CD4-positive, alpha-beta T cell (primary cell): ENCODE measurements at regions of chr16 and their contacts with region 1.

Region 1: GRCh38 chr16:50665128-50665878 is 15.8 kb downstream of the SNX20 start:
- DNase-seq: peak; percentile 69 to 92 (median 85)
- ATAC-seq: peak; percentile 60
- H3K4me3 ChIP-seq: peak overlapping the region; percentile 58
- H3K4me3 Mint-ChIP-seq: peak overlapping the region; percentile 86
- H3K27ac ChIP-seq: peak overlapping the region in 1 of 2 donors; percentile 18
- H3K27ac Mint-ChIP-seq: peak overlapping the region; percentile 88
- H3K4me1 ChIP-seq: peaks cover 39% of the 10 kb centered on the region
- H3K4me1 Mint-ChIP-seq: peaks cover 44% of the 10 kb centered on the region
- H3K27me3 ChIP-seq: no peaks in the 10 kb centered on the region
- H3K27me3 Mint-ChIP-seq: no peaks in the 10 kb centered on the region
- CTCF ChIP-seq: peak; percentile 89

Region 2: GRCh38 chr16:50210266-50211038 is 454.9 kb before region 1 on chr16:
- CTCF ChIA-PET with region 1: interaction called, 5 read pairs
- POLR2A ChIA-PET with region 1: interaction called, 3 read pairs
- intact Hi-C with region 1: loop called (anchors 2 to 5 kb)
- DNase-seq: peak; percentile 42 to 79 (median 58)
- ATAC-seq: peak; percentile 92
- H3K4me3 ChIP-seq: no peak overlapping the region
- H3K4me3 Mint-ChIP-seq: no peak overlapping the region
- H3K27ac ChIP-seq: peak overlapping the region in 1 of 2 donors; percentile 26
- H3K27ac Mint-ChIP-seq: peak overlapping the region; percentile 32
- H3K4me1 ChIP-seq: peaks cover 9% of the 10 kb centered on the region
- H3K4me1 Mint-ChIP-seq: peaks cover 50% of the 10 kb centered on the region
- H3K27me3 ChIP-seq: no peaks in the 10 kb centered on the region
- H3K27me3 Mint-ChIP-seq: no peaks in the 10 kb centered on the region
- CTCF ChIP-seq: peak; percentile 64

Region 3: DNA sequence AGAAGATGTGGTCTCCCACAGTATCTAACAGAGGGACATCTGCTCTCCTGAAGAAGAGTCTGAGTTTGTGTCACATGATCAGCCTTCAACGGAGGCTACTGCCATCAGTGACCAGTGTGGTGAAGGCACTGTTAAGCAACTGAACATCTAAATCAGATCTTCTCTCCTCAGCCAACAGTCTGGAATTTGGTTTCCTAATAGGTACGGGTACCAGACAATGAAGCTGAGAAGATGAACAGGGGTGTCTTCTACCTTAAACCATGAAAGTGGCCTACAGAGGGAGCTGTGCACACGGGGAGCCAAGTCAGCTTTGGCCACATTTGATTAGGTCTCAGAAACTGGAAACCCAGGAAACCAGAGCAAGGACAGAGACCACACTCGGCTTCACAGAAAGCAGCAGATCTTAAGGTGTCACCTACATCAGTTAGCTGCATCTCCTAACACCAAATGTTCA is 338.3 kb before region 1 on chr16:
- CTCF ChIA-PET with region 1: interaction called, 25 read pairs
- POLR2A ChIA-PET with region 1: interaction called, 6 read pairs
- intact Hi-C with region 1: loop called in 1 of 2 experiments (anchors 5 kb)
- DNase-seq: peak; percentile 39 to 93 (median 62)
- ATAC-seq: peak; percentile 92
- H3K4me3 ChIP-seq: no peak overlapping the region
- H3K4me3 Mint-ChIP-seq: no peak overlapping the region
- H3K27ac ChIP-seq: peak overlapping the region in 1 of 2 donors; percentile 20
- H3K27ac Mint-ChIP-seq: peak overlapping the region; percentile 84
- H3K4me1 ChIP-seq: peaks cover 38% of the 10 kb centered on the region
- H3K4me1 Mint-ChIP-seq: peaks cover 64% of the 10 kb centered on the region
- H3K27me3 ChIP-seq: no peaks in the 10 kb centered on the region
- H3K27me3 Mint-ChIP-seq: no peaks in the 10 kb centered on the region
- CTCF ChIP-seq: peak; percentile 83

Region 4: DNA sequence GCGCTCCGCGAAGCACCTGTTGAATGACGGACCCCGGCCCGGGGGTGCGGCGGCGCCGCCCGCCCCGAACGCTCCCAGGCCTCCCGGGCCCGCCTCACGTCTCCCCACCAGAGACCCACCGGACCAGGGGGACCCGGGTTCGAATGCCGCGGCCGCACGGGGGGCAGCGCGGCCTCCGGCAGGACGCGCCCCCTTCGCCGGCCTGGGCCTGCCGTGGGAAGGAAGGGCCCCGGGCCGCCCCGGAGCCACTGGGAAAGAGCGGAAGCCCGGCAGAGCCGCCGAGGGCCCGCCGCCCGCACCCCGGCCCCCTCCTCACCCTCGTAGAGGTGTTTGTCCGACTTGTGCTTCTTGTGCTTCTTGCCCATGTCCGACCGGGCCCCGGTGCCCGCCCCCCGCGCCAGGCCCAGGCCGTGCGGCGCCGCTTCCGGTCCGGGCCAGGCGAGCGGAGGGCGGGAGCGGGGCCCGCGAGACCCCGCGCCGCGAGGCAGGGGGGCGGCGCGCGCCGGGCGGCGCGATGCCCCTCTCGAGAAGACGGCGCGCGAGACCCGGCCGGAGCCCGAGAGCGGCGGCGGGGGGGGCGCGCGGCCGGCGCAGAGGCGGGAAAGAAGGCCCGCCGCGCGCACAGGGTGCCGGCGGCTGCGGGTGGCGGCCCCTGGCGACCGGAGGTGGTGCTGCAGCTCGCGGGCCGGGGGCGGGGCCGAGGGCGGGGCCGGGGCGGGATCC is 296.7 kb before region 1 on chr16 and contains the start of gene BRD7:
- CTCF ChIA-PET with region 1: interaction called, 11 read pairs
- POLR2A ChIA-PET with region 1: interaction called, 5 read pairs
- intact Hi-C with region 1: loop called in 1 of 2 experiments (anchors 2 kb)
- DNase-seq: peak; percentile 30 to 88 (median 70)
- ATAC-seq: peak; percentile 83
- H3K4me3 ChIP-seq: peak within 1 kb of the TSS; percentile 62
- H3K4me3 Mint-ChIP-seq: peak within 1 kb of the TSS; percentile 94
- H3K27ac ChIP-seq: peak within 1 kb of the TSS; percentile 15 to 52
- H3K27ac Mint-ChIP-seq: peak within 1 kb of the TSS; percentile 91
- H3K4me1 ChIP-seq: peaks cover 28% of the 10 kb centered on the region
- H3K4me1 Mint-ChIP-seq: peaks cover 58% of the 10 kb centered on the region
- H3K27me3 ChIP-seq: no peaks in the 10 kb centered on the region
- H3K27me3 Mint-ChIP-seq: no peaks in the 10 kb centered on the region
- CTCF ChIP-seq: no peak
- total RNA-seq, gene BRD7: 95.4 to 103 TPM

Region 5: GRCh38 chr16:50602531-50603205 is 62.6 kb before region 1 on chr16:
- CTCF ChIA-PET with region 1: no interaction called
- POLR2A ChIA-PET with region 1: no interaction called
- intact Hi-C with region 1: no loop called
- DNase-seq: peak; percentile 30 to 87 (median 60)
- ATAC-seq: peak; percentile 98
- H3K4me3 ChIP-seq: no peak overlapping the region
- H3K4me3 Mint-ChIP-seq: peak overlapping the region; percentile 5
- H3K27ac ChIP-seq: no peak overlapping the region
- H3K27ac Mint-ChIP-seq: peak overlapping the region; percentile 74
- H3K4me1 ChIP-seq: peaks cover 44% of the 10 kb centered on the region
- H3K4me1 Mint-ChIP-seq: peaks cover 52% of the 10 kb centered on the region
- H3K27me3 ChIP-seq: no peaks in the 10 kb centered on the region
- H3K27me3 Mint-ChIP-seq: no peaks in the 10 kb centered on the region
- CTCF ChIP-seq: no peak

Region 6: DNA sequence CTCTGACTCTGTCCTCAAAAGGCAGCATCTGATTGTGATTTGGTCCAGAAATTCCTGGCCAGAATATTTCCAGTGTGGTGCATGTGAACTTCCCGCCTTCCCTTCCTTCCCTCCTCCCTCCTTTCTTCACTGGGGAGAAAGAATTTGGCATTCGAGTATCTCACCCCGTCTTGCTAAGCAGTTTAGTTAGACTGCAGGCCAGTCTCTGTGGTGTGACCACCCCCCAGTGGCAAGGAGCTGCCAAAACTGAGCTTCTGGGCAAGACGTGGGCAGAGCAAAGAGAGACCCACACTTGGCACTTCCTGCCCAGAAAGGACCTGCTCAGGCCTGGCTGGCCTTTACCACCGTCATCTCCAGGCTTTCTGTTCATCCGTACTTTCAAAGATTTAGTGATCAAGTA is 20.6 kb before region 1 on chr16:
- CTCF ChIA-PET with region 1: interaction called, 12 read pairs
- POLR2A ChIA-PET with region 1: interaction called, 3 read pairs
- intact Hi-C with region 1: no loop called
- DNase-seq: peak in 12 of 14 experiments; percentile 15 to 69 (median 46)
- ATAC-seq: peak; percentile 81
- H3K4me3 ChIP-seq: no peak overlapping the region
- H3K4me3 Mint-ChIP-seq: no peak overlapping the region
- H3K27ac ChIP-seq: no peak overlapping the region
- H3K27ac Mint-ChIP-seq: no peak overlapping the region
- H3K4me1 ChIP-seq: peaks cover 4% of the 10 kb centered on the region
- H3K4me1 Mint-ChIP-seq: peaks cover 6% of the 10 kb centered on the region
- H3K27me3 ChIP-seq: no peaks in the 10 kb centered on the region
- H3K27me3 Mint-ChIP-seq: no peaks in the 10 kb centered on the region
- CTCF ChIP-seq: peak; percentile 50

Region 7: GRCh38 chr16:50747207-50747956 is 82.1 kb after region 1 on chr16:
- CTCF ChIA-PET with region 1: interaction called, 12 read pairs
- POLR2A ChIA-PET with region 1: interaction called, 93 read pairs
- intact Hi-C with region 1: loop called (anchors 1 to 2 kb)
- DNase-seq: peak in 5 of 14 experiments; percentile 14 to 86 (median 78)
- ATAC-seq: peak; percentile 72
- H3K4me3 ChIP-seq: peak overlapping the region; percentile 80
- H3K4me3 Mint-ChIP-seq: peak overlapping the region; percentile 86
- H3K27ac ChIP-seq: peak overlapping the region; percentile 38 to 66
- H3K27ac Mint-ChIP-seq: peak overlapping the region; percentile 87
- H3K4me1 ChIP-seq: peaks cover 23% of the 10 kb centered on the region
- H3K4me1 Mint-ChIP-seq: peaks cover 80% of the 10 kb centered on the region
- H3K27me3 ChIP-seq: no peaks in the 10 kb centered on the region
- H3K27me3 Mint-ChIP-seq: no peaks in the 10 kb centered on the region
- CTCF ChIP-seq: peak; percentile 72